GM10248 (cell line): ENCODE measurements at regions of chr6 and their contacts with region 1.

Region 1: DNA sequence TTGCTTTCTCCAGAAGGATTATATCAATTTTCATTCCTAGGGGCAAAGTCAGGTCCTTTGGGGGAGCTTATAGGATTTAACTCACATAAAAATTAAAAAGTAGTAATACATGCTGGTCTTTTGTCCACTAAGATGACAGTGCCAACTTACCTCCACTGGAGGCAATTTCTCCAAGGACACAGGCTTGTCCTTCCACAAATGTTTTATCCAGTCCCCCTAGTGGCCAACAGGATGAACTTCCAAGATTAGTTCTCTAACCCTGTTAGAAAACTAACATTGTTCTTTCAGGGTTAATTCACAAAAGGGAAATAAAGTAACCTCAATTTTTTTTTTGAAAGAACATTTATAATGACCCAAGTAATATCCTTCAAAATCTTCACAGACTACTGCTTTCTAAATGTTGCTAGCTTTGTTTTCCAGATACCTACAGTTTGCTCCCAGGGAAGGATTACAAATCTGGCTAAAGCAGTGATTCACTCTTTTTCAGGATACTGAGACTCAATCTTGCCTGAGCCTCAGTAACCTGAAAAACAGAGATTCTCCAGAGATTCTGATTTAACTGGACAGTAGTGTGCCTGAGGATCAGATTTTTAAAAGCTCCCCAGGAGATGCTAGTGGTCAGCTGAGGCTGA is 31.7 kb upstream of the UBR2 start:
- DNase-seq: peak; percentile 69
- CTCF ChIP-seq: peak; percentile 84

Region 2: GRCh38 chr6:42453031-42453653 is 79.0 kb before region 1 on chr6:
- CTCF ChIA-PET with region 1: interaction called, 10 read pairs
- POLR2A ChIA-PET with region 1: no interaction called
- DNase-seq: peak; percentile 91
- CTCF ChIP-seq: no peak

Region 3: GRCh38 chr6:42459888-42460287 is 72.3 kb before region 1 on chr6:
- CTCF ChIA-PET with region 1: interaction called, 10 read pairs
- POLR2A ChIA-PET with region 1: no interaction called
- DNase-seq: no peak
- CTCF ChIP-seq: peak; percentile 14

Region 4: DNA sequence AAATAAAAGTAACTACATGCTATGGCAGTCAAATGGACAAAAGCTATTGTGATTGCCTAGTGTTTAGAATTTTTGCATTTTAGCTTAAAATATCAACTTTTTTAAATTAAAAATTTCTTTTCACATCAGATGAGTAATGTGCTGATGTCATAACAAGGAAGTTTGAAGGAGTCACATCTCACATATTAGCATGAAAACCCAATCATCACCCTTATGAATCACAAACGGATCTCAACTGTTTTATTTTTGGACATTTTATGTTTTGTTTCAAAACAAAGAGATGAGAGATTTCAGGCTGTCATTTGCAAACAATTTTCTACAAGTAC is 26.8 kb before region 1 on chr6:
- CTCF ChIA-PET with region 1: interaction called, 32 read pairs
- POLR2A ChIA-PET with region 1: no interaction called
- DNase-seq: no peak
- CTCF ChIP-seq: no peak

Region 5: GRCh38 chr6:42511803-42512422 is 20.2 kb before region 1 on chr6:
- CTCF ChIA-PET with region 1: interaction called, 57 read pairs
- POLR2A ChIA-PET with region 1: no interaction called
- DNase-seq: no peak
- CTCF ChIP-seq: no peak

Region 6: GRCh38 chr6:42520786-42521607 is 11.2 kb before region 1 on chr6:
- CTCF ChIA-PET with region 1: interaction called, 57 read pairs
- POLR2A ChIA-PET with region 1: no interaction called
- DNase-seq: no peak
- CTCF ChIP-seq: no peak

Region 7: GRCh38 chr6:42563697-42564505 is 31.7 kb after region 1 on chr6 and contains the start of gene UBR2:
- CTCF ChIA-PET with region 1: interaction called, 10 read pairs
- POLR2A ChIA-PET with region 1: no interaction called
- DNase-seq: peak; percentile 92
- CTCF ChIP-seq: peak; percentile 27